Esophagus muscularis mucosa (tissue), 4 donors: ENCODE measurements at regions of chr19 and their contacts with region 1.

Region 1: GRCh38 chr19:35545001-35545911 is at the start of gene TMEM147:
- DNase-seq: peak; percentile 96
- H3K4me3 ChIP-seq: peak within 1 kb of the TSS; percentile 79 to 89 (median 84)
- H3K27ac ChIP-seq: peak within 1 kb of the TSS; percentile 81 to 87 (median 84)
- H3K4me1 ChIP-seq: peaks cover 16 to 38% (median 28%) of the 10 kb centered on the region in 4 donors
- H3K27me3 ChIP-seq: no peaks in the 10 kb centered on the region
- CTCF ChIP-seq: no peak
- EP300 ChIP-seq: no peak
- POLR2A ChIP-seq: no peak
- total RNA-seq, gene TMEM147: 47.3 to 109 (median 91.6) TPM

Region 2: GRCh38 chr19:35585848-35586247 is 40.6 kb after region 1 on chr19 and contains the start of gene PMIS2:
- intact Hi-C with region 1: no loop called
- DNase-seq: no peak
- H3K4me3 ChIP-seq: no peak within 1 kb of the TSS
- H3K27ac ChIP-seq: no peak within 1 kb of the TSS
- H3K4me1 ChIP-seq: no peaks in the 10 kb centered on the region
- H3K27me3 ChIP-seq: peaks cover 0 to 34% (median 0%) of the 10 kb centered on the region in 4 donors
- CTCF ChIP-seq: no peak
- EP300 ChIP-seq: no peak
- POLR2A ChIP-seq: no peak
- total RNA-seq, gene PMIS2: not detected

Region 3: DNA sequence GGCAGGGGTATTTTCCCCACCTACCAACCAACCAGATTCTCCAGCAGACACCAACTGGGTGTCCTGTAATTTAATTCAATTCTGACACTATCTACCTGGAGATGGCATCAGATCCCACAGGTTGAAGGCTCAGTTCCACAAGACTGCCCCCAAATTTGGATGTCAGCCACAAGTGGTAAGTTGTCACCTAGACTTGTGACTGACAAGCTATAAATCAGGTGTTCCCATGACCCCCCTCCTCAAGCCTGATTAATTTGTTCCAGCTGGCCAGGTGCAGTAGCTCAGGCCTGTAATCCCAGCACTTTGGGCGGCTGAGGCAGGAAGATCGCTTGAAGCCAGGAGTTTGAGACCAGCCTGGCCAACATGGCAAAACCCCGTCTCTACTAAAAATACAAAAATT is 56.7 kb after region 1 on chr19:
- intact Hi-C with region 1: no loop called
- DNase-seq: no peak
- H3K4me3 ChIP-seq: no peak overlapping the region
- H3K27ac ChIP-seq: no peak overlapping the region
- H3K4me1 ChIP-seq: no peaks in the 10 kb centered on the region
- H3K27me3 ChIP-seq: peaks cover 0 to 28% (median 0%) of the 10 kb centered on the region in 4 donors
- CTCF ChIP-seq: no peak
- EP300 ChIP-seq: no peak
- POLR2A ChIP-seq: no peak

Region 4: GRCh38 chr19:35612559-35613321 is 67.5 kb after region 1 on chr19 and contains the start of gene HAUS5:
- intact Hi-C with region 1: loop called (anchors 5 kb)
- DNase-seq: peak; percentile 98
- H3K4me3 ChIP-seq: peak within 1 kb of the TSS; percentile 74 to 91 (median 80)
- H3K27ac ChIP-seq: peak within 1 kb of the TSS; percentile 66 to 79 (median 73)
- H3K4me1 ChIP-seq: peaks cover 10 to 21% (median 14%) of the 10 kb centered on the region in 4 donors
- H3K27me3 ChIP-seq: peaks cover 0 to 7% (median 0%) of the 10 kb centered on the region in 4 donors
- CTCF ChIP-seq: peak in 1 of 3 experiments; percentile 31
- EP300 ChIP-seq: no peak
- POLR2A ChIP-seq: no peak
- total RNA-seq, gene HAUS5: 3.7 to 4.7 (median 4.3) TPM

Region 5: GRCh38 chr19:35628565-35629331 is 83.5 kb after region 1 on chr19 and contains the start of gene RBM42:
- intact Hi-C with region 1: loop called (anchors 5 kb)
- DNase-seq: peak; percentile 100
- H3K4me3 ChIP-seq: peak within 1 kb of the TSS; percentile 88 to 99 (median 94)
- H3K27ac ChIP-seq: peak within 1 kb of the TSS; percentile 86 to 96 (median 92)
- H3K4me1 ChIP-seq: peaks cover 19 to 32% (median 28%) of the 10 kb centered on the region in 4 donors
- H3K27me3 ChIP-seq: no peaks in the 10 kb centered on the region
- CTCF ChIP-seq: peak in 1 of 3 experiments; percentile 41
- EP300 ChIP-seq: no peak
- POLR2A ChIP-seq: peak; percentile 49
- total RNA-seq, gene RBM42: 63.1 to 112 (median 95.2) TPM

Region 6: DNA sequence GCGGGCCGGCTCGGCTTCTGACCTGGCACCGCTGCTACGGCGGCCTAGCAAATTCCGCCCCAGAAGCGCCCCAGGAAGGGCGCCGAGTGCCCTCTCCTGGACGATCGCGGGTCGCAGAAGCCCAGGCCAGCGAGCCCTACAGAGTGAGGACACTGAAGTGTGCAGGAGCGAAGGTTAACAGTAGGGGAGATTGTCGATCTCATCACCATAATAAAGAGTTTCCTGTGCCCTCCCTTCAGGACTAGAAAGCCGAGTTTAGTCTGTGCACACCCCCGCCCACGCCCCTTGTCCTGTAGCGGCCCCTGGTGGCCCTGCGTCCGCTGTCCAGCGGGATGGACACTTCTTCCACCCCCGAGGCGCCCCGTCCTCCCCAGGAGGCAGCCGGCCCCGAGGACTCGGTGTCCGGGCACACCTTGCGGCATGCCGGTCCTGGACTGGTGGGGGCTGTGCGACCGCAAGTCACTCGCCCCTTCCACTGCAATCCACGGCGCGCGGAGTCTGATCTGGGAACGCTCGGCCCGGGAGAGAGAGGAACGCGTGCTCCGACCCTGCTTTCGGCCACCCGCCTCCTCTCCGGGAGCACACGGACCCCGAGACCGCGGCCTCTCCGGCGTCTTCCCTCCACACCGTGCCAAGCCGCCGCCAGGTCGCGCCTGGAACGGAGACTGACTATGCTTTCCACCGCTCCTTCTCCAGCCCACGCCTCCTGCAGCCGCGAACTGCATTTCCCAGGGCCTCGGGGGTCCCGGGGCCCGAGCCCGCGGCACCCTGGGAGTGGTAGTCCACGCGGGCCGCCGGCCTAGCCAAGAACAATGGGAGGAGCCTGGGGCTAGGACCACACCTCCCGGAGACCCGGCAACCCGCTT is 171.8 kb after region 1 on chr19:
- intact Hi-C with region 1: loop called (anchors 5 kb)
- DNase-seq: peak; percentile 97
- H3K4me3 ChIP-seq: peak overlapping the region; percentile 76 to 98 (median 88)
- H3K27ac ChIP-seq: peak overlapping the region; percentile 83 to 94 (median 90)
- H3K4me1 ChIP-seq: peaks cover 24 to 46% (median 38%) of the 10 kb centered on the region in 4 donors
- H3K27me3 ChIP-seq: no peaks in the 10 kb centered on the region
- CTCF ChIP-seq: peak; percentile 86 to 94 (median 90)
- EP300 ChIP-seq: no peak
- POLR2A ChIP-seq: no peak